ENCODE measurements at regions of chr15 and their contacts with region 1.

Region 1: GRCh38 chr15:78457101-78457500 is 19.1 kb downstream of the IREB2 start:
- DNase-seq: peak; percentile 21 to 45
- ATAC-seq: peak in 1 of 2 experiments; percentile 79; a peak in 3 of 6 replicates
- H3K4me3 ChIP-seq: no peak overlapping the region
- H3K27ac ChIP-seq: no peak overlapping the region; a peak in 1 of 6 replicates
- H3K4me1 ChIP-seq: peaks cover 54% of the 10 kb centered on the region
- CTCF ChIP-seq: no peak
- EP300 ChIP-seq: no peak
- POLR2A ChIP-seq: no peak
- RAD21 ChIP-seq: no peak

Region 2: DNA sequence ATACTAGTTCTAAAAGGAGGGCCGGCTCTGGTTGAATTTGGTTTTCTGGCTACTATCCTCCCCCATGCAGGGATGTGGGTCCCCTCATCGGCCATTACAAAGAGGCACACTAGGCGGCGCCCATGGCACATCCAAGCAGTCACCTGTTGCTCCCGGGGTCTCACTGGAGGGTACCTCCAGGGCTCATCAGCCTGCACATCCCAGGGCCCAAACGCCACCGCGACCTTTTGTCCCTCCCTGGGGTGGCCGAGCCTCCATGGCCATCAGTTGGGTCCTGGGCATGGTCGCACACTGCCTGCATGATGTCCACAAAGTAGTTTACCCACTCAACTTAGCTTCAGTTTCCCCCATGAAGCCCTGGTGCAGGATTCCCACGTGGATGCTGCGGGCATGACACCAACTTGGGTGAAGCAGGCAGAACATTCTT is 279.6 kb before region 1 on chr15:
- CTCF ChIA-PET with region 1: no interaction called
- POLR2A ChIA-PET with region 1: no interaction called
- DNase-seq: peak; percentile 44 to 61
- ATAC-seq: peak; percentile 75 to 87
- H3K4me3 ChIP-seq: no peak overlapping the region
- H3K27ac ChIP-seq: no peak overlapping the region
- H3K4me1 ChIP-seq: no peaks in the 10 kb centered on the region
- CTCF ChIP-seq: peak; percentile 93
- EP300 ChIP-seq: no peak
- POLR2A ChIP-seq: no peak
- RAD21 ChIP-seq: peak; percentile 94 to 95

Region 3: GRCh38 chr15:78481917-78482316 is 24.8 kb after region 1 on chr15:
- CTCF ChIA-PET with region 1: interaction called, 25 read pairs
- POLR2A ChIA-PET with region 1: no interaction called
- DNase-seq: no peak
- ATAC-seq: peak; percentile 29 to 44; a peak in 4 of 6 replicates
- H3K4me3 ChIP-seq: no peak overlapping the region
- H3K27ac ChIP-seq: no peak overlapping the region
- H3K4me1 ChIP-seq: no peaks in the 10 kb centered on the region
- CTCF ChIP-seq: no peak
- EP300 ChIP-seq: no peak
- POLR2A ChIP-seq: no peak
- RAD21 ChIP-seq: no peak

Region 4: GRCh38 chr15:78552597-78552996 is 95.5 kb after region 1 on chr15:
- CTCF ChIA-PET with region 1: no interaction called
- POLR2A ChIA-PET with region 1: no interaction called
- DNase-seq: no peak
- ATAC-seq: peak; percentile 44 to 48; a peak in 4 of 6 replicates
- H3K4me3 ChIP-seq: no peak overlapping the region
- H3K27ac ChIP-seq: no peak overlapping the region
- H3K4me1 ChIP-seq: no peaks in the 10 kb centered on the region
- CTCF ChIP-seq: no peak
- EP300 ChIP-seq: no peak
- POLR2A ChIP-seq: no peak
- RAD21 ChIP-seq: no peak